ENCODE measurements at regions of chr18 and their contacts with region 1.

Region 1: GRCh38 chr18:49858309-49859020 is 45.1 kb upstream of the ACAA2 start:
- DNase-seq: peak; percentile 61 to 71 (median 66)
- ATAC-seq: peak; percentile 83
- H3K4me3 ChIP-seq: no peak overlapping the region
- H3K27ac ChIP-seq: no peak overlapping the region
- H3K4me1 ChIP-seq: no peaks in the 10 kb centered on the region; a peak in 1 of 5 replicates
- H3K27me3 ChIP-seq: peaks cover 0 to 18% of the 10 kb centered on the region in 2 experiments; a peak in 2 of 5 replicates
- CTCF ChIP-seq: peak; percentile 77 to 87 (median 81)
- EP300 ChIP-seq: no peak
- POLR2A ChIP-seq: no peak
- RAD21 ChIP-seq: peak; percentile 87 to 88

Region 2: DNA sequence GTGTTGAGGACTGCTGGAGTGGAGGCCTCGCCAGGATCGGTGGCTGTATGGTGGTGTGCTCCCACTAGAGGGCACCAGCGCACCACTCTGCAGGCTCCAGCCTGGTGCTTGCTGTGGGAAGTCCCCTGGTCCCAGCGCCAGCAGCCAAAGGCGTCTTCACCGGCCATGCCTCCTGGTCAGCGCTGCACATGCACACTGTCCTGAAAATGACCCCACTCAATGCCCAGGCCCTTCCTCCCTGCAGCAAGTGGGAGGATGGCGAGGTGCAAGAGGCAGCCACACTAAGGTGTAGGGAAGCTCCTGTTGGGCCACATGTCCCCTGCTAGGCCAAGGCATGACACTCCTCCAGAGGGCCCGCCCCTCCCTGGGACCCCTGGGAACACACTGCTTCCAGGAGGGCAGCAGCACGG is 1183.1 kb before region 1 on chr18:
- CTCF ChIA-PET with region 1: interaction called, 9 read pairs
- POLR2A ChIA-PET with region 1: no interaction called
- in situ Hi-C with region 1: loop called (anchors 25 kb)
- intact Hi-C with region 1: no loop called
- DNase-seq: peak; percentile 73 to 79 (median 77)
- ATAC-seq: peak; percentile 97
- H3K4me3 ChIP-seq: no peak overlapping the region
- H3K27ac ChIP-seq: no peak overlapping the region
- H3K4me1 ChIP-seq: peaks cover 0 to 7% of the 10 kb centered on the region in 2 experiments; a peak in 2 of 5 replicates
- H3K27me3 ChIP-seq: no peaks in the 10 kb centered on the region
- CTCF ChIP-seq: peak; percentile 78 to 82 (median 82)
- EP300 ChIP-seq: no peak
- POLR2A ChIP-seq: no peak
- RAD21 ChIP-seq: peak; percentile 69 to 87

Region 3: DNA sequence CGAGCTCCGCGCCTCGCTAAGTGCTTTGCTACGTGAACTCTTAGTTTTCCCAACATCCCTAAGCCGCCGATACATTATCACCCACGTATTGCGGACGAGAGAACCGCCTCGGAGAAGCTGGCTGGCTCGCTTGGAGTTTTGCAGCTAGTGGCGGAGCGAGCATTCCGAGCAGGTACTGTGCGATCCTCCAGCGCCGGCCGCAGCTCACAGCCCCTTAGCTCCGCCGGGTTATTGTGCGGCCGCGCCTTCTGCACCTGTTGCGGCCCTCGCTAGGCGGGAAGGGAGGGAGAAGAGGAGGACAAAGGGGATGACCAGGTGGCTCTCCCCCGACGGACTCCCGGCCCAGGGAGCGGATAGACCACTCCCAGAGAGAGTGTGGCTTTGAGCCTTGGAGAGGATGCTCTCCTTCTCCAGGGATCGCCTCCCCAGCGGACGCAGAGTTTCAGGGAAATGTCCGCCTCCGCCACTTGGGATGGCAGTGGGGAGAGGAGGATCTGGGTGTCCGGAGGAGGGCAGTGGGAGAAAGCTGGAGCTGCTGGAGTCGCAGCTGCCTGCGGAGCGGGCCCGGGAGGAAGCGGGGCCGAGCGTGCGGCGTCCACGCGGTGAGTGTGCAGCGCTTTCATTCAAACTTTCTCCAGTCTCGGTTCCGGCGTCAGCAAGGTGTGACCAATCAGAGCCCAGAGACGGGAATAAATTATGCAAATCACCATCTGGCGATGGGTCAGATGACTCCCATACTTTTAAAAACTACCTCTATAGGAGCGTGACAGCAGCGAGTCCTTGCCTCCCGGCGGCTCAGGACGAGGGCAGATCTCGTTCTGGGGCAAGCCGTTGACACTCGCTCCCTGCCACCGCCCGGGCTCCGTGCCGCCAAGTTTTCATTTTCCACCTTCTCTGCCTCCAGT is 296.9 kb before region 1 on chr18 and contains the start of gene LIPG:
- CTCF ChIA-PET with region 1: no interaction called
- POLR2A ChIA-PET with region 1: no interaction called
- in situ Hi-C with region 1: no loop called
- intact Hi-C with region 1: loop called (anchors 1 kb)
- DNase-seq: peak; percentile 75 to 80 (median 78)
- ATAC-seq: peak; percentile 94
- H3K4me3 ChIP-seq: peak within 1 kb of the TSS; percentile 18; the same call in 1 of the 2 replicates
- H3K27ac ChIP-seq: no peak within 1 kb of the TSS
- H3K4me1 ChIP-seq: peaks cover 0 to 23% of the 10 kb centered on the region in 2 experiments; a peak in 4 of 5 replicates
- H3K27me3 ChIP-seq: peaks cover 0 to 21% of the 10 kb centered on the region in 2 experiments; a peak in 3 of 5 replicates
- CTCF ChIP-seq: no peak
- EP300 ChIP-seq: no peak
- POLR2A ChIP-seq: no peak
- RAD21 ChIP-seq: no peak
- polyA plus RNA-seq, gene LIPG: 0.76 to 1.6 TPM

Region 4: DNA sequence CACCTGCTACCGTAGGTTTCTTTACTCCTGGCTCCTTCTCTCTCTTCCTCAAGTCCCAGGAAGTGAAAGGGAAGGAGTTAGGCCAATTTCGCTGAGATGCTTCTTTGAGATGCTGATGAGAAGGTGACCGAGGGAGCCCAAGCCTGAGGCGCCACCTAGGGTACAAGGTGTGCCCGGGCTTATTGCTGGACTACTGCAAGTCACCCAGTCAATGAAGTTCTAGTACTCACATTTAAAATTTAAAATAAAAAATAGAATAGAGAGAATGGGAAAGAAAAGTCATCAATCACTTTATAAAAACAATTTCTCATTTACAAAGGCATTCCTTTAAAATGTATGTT is 90.4 kb before region 1 on chr18:
- CTCF ChIA-PET with region 1: no interaction called
- POLR2A ChIA-PET with region 1: no interaction called
- in situ Hi-C with region 1: no loop called
- intact Hi-C with region 1: loop called (anchors 10 kb)
- DNase-seq: peak in 3 of 4 experiments; percentile 12 to 43 (median 21)
- ATAC-seq: peak; percentile 78
- H3K4me3 ChIP-seq: no peak overlapping the region
- H3K27ac ChIP-seq: no peak overlapping the region
- H3K4me1 ChIP-seq: no peaks in the 10 kb centered on the region
- H3K27me3 ChIP-seq: peaks cover 0 to 8% of the 10 kb centered on the region in 2 experiments; a peak in 1 of 5 replicates
- CTCF ChIP-seq: peak; percentile 44 to 56 (median 51); a peak in 5 of 6 replicates
- EP300 ChIP-seq: no peak
- POLR2A ChIP-seq: no peak
- RAD21 ChIP-seq: peak; percentile 55 to 67

Region 5: GRCh38 chr18:50061876-50062517 is 203.5 kb after region 1 on chr18:
- CTCF ChIA-PET with region 1: no interaction called
- POLR2A ChIA-PET with region 1: no interaction called
- in situ Hi-C with region 1: no loop called
- intact Hi-C with region 1: no loop called
- DNase-seq: no peak
- ATAC-seq: no peak
- H3K4me3 ChIP-seq: no peak overlapping the region
- H3K27ac ChIP-seq: no peak overlapping the region
- H3K4me1 ChIP-seq: no peaks in the 10 kb centered on the region
- H3K27me3 ChIP-seq: no peaks in the 10 kb centered on the region
- CTCF ChIP-seq: no peak
- EP300 ChIP-seq: no peak
- POLR2A ChIP-seq: no peak
- RAD21 ChIP-seq: no peak

Region 6: GRCh38 chr18:50111265-50111792 is 252.9 kb after region 1 on chr18:
- CTCF ChIA-PET with region 1: no interaction called
- POLR2A ChIA-PET with region 1: no interaction called
- in situ Hi-C with region 1: no loop called
- intact Hi-C with region 1: no loop called
- DNase-seq: no peak
- ATAC-seq: no peak
- H3K4me3 ChIP-seq: no peak overlapping the region
- H3K27ac ChIP-seq: no peak overlapping the region
- H3K4me1 ChIP-seq: no peaks in the 10 kb centered on the region
- H3K27me3 ChIP-seq: peaks cover 0 to 6% of the 10 kb centered on the region in 2 experiments; a peak in 1 of 5 replicates
- CTCF ChIP-seq: no peak
- EP300 ChIP-seq: no peak
- POLR2A ChIP-seq: no peak
- RAD21 ChIP-seq: no peak

Region 7: DNA sequence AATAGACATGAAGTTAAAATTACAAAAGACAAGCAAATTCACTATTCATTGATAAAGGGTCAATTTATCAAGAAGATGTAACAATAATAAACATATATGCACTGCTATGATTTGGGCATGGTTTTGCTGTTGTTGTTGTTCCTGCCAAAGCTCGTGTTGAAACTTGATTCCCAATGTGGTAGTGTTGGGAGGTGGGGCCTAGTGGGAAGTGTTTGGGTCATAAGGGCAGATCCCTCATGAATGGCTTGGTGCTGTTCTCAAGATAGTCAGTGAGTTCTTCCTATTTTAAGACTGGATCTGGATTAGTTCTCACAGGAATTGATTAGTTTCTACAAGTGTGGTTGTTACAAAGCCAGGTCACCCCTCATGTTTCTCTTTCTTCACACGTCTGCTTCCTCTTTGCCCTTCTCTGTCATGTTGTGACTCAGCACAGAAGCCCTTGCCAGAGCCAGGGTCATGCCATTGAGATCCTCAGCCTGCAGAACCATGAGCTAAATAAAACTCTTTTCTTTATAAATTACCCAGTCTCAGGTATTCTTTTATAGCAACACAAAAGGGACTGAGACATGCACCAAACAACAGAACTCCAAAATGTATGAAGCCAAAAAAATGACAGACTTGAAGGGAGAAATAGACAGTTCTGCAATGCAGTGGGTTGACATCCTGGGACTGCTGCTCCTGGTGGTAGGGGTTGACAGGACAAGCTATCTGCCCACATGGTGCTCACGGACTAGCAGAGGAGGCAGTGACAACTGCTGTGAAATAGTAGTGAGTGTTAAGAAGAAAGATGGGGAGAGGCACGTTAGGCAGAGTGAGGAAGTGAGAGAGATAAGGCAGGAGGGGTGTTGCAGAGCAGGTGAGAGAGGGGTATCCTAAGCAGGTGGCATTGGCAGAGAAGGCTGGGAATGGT is 497.8 kb after region 1 on chr18:
- CTCF ChIA-PET with region 1: no interaction called
- POLR2A ChIA-PET with region 1: no interaction called
- in situ Hi-C with region 1: no loop called
- intact Hi-C with region 1: loop called (anchors 5 kb)
- DNase-seq: peak in 1 of 4 experiments; percentile 36
- ATAC-seq: peak; percentile 78
- H3K4me3 ChIP-seq: no peak overlapping the region
- H3K27ac ChIP-seq: peak overlapping the region; percentile 25; the same call in 1 of the 3 replicates
- H3K4me1 ChIP-seq: peaks cover 13 to 30% of the 10 kb centered on the region in 2 experiments
- H3K27me3 ChIP-seq: no peaks in the 10 kb centered on the region
- CTCF ChIP-seq: peak in 2 of 3 experiments; percentile 9 to 30; a peak in 1 of 6 replicates
- EP300 ChIP-seq: no peak
- POLR2A ChIP-seq: no peak
- RAD21 ChIP-seq: no peak

Measured in K562 (cell line).